ENCODE measurements at regions of chr15 and their contacts with region 1.

Region 1: DNA sequence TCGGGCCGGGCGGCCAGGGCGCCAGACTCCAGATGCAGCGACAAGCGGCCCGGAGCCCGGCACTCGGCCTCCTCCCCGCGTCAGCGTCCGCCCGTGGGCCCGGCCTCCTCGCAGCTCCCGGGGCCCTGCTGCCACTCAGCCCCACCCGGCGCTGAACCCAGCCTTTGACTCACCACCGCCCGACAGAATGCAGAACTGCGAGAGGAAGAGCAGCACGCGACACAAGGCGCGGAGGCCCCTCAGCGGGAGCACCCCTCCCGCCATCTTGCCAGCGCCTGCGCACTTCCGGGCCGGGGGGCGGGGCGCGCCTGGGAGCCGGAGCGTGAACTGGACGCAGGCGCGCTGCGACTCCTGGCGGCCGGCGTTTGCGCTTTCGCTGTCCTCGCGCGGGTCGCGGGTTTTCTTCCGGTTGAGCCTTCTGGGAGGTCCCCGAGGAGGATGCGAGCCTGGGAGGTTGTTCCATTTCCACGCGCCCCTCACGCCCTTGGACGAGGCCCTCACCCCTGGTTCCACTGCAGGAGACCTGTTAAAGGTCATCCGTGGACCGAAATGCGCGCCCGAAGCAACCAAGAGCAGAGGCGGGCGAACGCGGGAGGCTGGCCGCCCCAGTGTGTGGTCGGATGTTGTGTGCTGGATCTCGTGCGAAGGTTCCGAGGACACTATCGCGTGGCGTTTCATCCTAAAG is at the start of gene TM2D3:
- DNase-seq: peak; percentile 89 to 99 (median 94)
- ATAC-seq: peak; percentile 94
- H3K4me3 ChIP-seq: peak within 1 kb of the TSS; percentile 82
- H3K4me3 Mint-ChIP-seq: peak within 1 kb of the TSS; percentile 97
- H3K27ac ChIP-seq: peak within 1 kb of the TSS; percentile 96
- H3K27ac Mint-ChIP-seq: peak within 1 kb of the TSS; percentile 98
- H3K4me1 ChIP-seq: peaks cover 24% of the 10 kb centered on the region
- H3K4me1 Mint-ChIP-seq: peaks cover 48% of the 10 kb centered on the region
- H3K27me3 ChIP-seq: no peaks in the 10 kb centered on the region
- H3K27me3 Mint-ChIP-seq: no peaks in the 10 kb centered on the region
- CTCF ChIP-seq: peak; percentile 82
- total RNA-seq, gene TM2D3: 102 to 107 TPM

Region 2: GRCh38 chr15:101088788-101089583 is 563.3 kb before region 1 on chr15:
- CTCF ChIA-PET with region 1: no interaction called
- POLR2A ChIA-PET with region 1: no interaction called
- intact Hi-C with region 1: loop called in 1 of 2 experiments (anchors 5 kb)
- DNase-seq: peak; percentile 49 to 88 (median 76)
- ATAC-seq: peak; percentile 96
- H3K4me3 ChIP-seq: no peak overlapping the region
- H3K4me3 Mint-ChIP-seq: no peak overlapping the region
- H3K27ac ChIP-seq: no peak overlapping the region
- H3K27ac Mint-ChIP-seq: no peak overlapping the region
- H3K4me1 ChIP-seq: peaks cover 7% of the 10 kb centered on the region
- H3K4me1 Mint-ChIP-seq: no peaks in the 10 kb centered on the region
- H3K27me3 ChIP-seq: peaks cover 0 to 5% of the 10 kb centered on the region in 2 experiments
- H3K27me3 Mint-ChIP-seq: no peaks in the 10 kb centered on the region
- CTCF ChIP-seq: peak; percentile 91

Region 3: GRCh38 chr15:101179341-101180153 is 472.7 kb before region 1 on chr15:
- CTCF ChIA-PET with region 1: no interaction called
- POLR2A ChIA-PET with region 1: no interaction called
- intact Hi-C with region 1: no loop called
- DNase-seq: no peak
- ATAC-seq: no peak
- H3K4me3 ChIP-seq: no peak overlapping the region
- H3K4me3 Mint-ChIP-seq: no peak overlapping the region
- H3K27ac ChIP-seq: no peak overlapping the region
- H3K27ac Mint-ChIP-seq: peak overlapping the region; percentile 60
- H3K4me1 ChIP-seq: no peaks in the 10 kb centered on the region
- H3K4me1 Mint-ChIP-seq: peaks cover 35% of the 10 kb centered on the region
- H3K27me3 ChIP-seq: no peaks in the 10 kb centered on the region
- H3K27me3 Mint-ChIP-seq: no peaks in the 10 kb centered on the region
- CTCF ChIP-seq: no peak

Region 4: DNA sequence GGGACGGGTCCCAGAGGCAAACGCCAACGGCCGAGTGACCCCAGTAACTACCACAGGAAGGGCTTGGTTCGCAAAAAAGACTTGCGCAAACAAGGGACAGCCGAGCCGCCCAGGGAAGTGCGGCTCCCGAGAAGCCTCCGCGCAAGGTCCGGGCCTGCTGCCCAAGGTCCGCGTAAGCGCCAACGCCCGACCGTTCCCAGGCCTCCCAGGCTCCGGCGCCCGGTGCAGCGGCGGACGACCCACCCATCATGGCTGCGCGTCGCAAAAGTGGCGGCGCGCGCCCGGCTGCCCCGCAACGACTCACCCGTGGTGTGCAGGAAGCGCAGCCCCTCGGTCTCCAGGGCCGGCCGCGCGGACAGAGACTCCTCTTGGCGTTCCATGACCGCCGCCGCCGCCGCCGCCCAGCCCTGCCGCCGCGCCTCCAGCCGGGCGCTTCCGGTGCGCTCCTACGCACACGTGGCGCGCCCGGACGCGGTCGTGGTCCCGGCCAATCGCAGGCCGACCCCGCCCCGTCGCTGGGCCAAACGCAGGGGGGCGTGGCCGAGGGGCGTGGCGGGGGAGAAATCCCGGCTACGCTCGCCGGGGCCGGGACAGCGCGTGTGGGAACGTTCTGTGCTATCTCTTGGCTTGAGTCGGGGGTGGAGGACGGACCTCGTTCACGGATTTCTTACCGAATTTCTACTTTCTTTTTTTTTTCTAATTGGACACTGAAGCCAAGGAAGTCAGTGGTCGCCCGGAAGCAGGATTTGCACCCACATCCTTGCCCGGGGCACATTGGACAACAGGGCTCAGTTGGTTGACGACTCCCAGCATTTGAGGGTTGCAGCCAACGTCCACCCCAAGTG is 375.0 kb before region 1 on chr15 and contains the start of gene SELENOS:
- CTCF ChIA-PET with region 1: no interaction called
- POLR2A ChIA-PET with region 1: no interaction called
- intact Hi-C with region 1: loop called in 1 of 2 experiments (anchors 5 kb)
- DNase-seq: peak; percentile 68 to 95 (median 84)
- ATAC-seq: peak; percentile 96
- H3K4me3 ChIP-seq: peak within 1 kb of the TSS; percentile 92
- H3K4me3 Mint-ChIP-seq: peak within 1 kb of the TSS; percentile 97
- H3K27ac ChIP-seq: peak within 1 kb of the TSS; percentile 56 to 58
- H3K27ac Mint-ChIP-seq: peak within 1 kb of the TSS; percentile 95
- H3K4me1 ChIP-seq: peaks cover 23% of the 10 kb centered on the region
- H3K4me1 Mint-ChIP-seq: peaks cover 24% of the 10 kb centered on the region
- H3K27me3 ChIP-seq: no peaks in the 10 kb centered on the region
- H3K27me3 Mint-ChIP-seq: no peaks in the 10 kb centered on the region
- CTCF ChIP-seq: no peak
- total RNA-seq, gene SELENOS: 41.7 to 48.5 TPM

Region 5: DNA sequence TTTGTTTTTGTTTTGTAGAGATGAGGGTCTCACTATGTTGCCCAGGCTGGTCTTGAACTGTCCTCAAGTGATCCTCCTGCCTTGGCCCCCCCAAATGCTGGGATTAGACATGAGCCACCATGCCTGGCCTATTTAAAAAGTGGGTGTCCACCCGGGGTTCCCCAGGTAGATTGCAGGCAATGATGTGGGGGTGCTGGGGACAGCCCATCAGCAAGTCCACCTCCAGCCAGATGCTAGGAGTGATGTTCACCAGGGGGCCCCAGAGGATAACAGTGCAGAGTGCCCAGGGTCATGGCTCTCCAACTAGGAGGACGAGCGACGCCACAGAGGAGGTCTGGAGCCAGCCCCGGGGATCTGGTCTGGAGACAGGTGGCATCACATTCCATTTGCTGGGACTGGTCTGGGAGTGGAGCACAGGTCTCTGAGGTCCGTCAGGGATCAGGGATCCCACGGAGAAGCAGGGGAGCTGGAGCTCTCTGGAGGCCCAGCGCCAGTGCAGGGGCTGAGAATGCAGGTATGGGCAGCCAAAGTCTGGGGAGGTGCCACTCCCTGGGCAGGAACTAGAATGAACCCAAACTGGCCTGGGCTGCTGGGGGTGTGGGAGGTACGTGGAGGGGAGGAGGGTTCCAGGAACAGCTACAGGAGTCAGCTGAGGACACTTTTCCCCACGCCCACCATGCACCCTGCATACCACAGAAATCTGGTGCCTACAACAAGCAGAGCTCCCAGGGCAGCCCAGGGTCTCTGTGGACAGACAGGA is 111.6 kb before region 1 on chr15:
- CTCF ChIA-PET with region 1: no interaction called
- POLR2A ChIA-PET with region 1: no interaction called
- intact Hi-C with region 1: no loop called
- DNase-seq: peak in 1 of 14 experiments; percentile 25
- ATAC-seq: no peak
- H3K4me3 ChIP-seq: no peak overlapping the region
- H3K4me3 Mint-ChIP-seq: no peak overlapping the region
- H3K27ac ChIP-seq: no peak overlapping the region
- H3K27ac Mint-ChIP-seq: no peak overlapping the region
- H3K4me1 ChIP-seq: no peaks in the 10 kb centered on the region
- H3K4me1 Mint-ChIP-seq: no peaks in the 10 kb centered on the region
- H3K27me3 ChIP-seq: peaks cover 0 to 5% of the 10 kb centered on the region in 2 experiments
- H3K27me3 Mint-ChIP-seq: peaks cover 21% of the 10 kb centered on the region
- CTCF ChIP-seq: no peak

Region 6: DNA sequence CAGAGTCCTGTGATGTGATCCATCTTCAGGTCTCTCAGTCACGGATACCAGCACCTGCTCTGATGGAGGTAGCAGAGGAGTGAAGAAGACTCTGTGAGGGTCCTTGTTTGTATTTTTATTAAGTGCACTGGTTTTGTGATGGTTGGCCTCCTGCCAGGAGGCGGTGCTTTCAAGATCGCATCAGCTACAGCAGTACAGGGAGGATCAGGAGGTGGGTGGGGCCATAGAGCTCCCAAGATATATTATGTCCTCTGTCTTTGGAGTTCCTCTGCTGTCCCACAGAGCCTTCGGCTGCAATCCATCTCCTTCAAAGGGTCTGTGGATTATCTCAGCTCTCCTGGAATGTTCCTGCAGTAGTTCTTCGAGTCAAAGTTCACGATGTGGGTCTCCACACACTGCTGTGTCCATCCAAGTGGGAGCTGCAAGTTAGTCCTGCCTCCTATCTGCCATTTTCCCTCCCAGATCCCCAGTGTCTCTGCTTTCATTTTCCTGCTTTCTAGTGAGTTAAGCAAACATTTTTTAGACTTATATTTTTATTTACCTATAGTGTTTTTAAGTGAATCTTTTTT is 54.8 kb before region 1 on chr15:
- CTCF ChIA-PET with region 1: no interaction called
- POLR2A ChIA-PET with region 1: no interaction called
- intact Hi-C with region 1: no loop called
- DNase-seq: no peak
- ATAC-seq: no peak
- H3K4me3 ChIP-seq: no peak overlapping the region
- H3K4me3 Mint-ChIP-seq: no peak overlapping the region
- H3K27ac ChIP-seq: no peak overlapping the region
- H3K27ac Mint-ChIP-seq: no peak overlapping the region
- H3K4me1 ChIP-seq: no peaks in the 10 kb centered on the region
- H3K4me1 Mint-ChIP-seq: no peaks in the 10 kb centered on the region
- H3K27me3 ChIP-seq: peaks cover 2 to 20% of the 10 kb centered on the region in 2 experiments
- H3K27me3 Mint-ChIP-seq: peaks cover 78% of the 10 kb centered on the region
- CTCF ChIP-seq: no peak

Region 7: GRCh38 chr15:101675796-101676582 is 23.7 kb after region 1 on chr15:
- CTCF ChIA-PET with region 1: no interaction called
- POLR2A ChIA-PET with region 1: no interaction called
- intact Hi-C with region 1: no loop called
- DNase-seq: no peak
- ATAC-seq: no peak
- H3K4me3 ChIP-seq: no peak overlapping the region
- H3K4me3 Mint-ChIP-seq: peak overlapping the region; percentile 5
- H3K27ac ChIP-seq: no peak overlapping the region
- H3K27ac Mint-ChIP-seq: peak overlapping the region; percentile 64
- H3K4me1 ChIP-seq: no peaks in the 10 kb centered on the region
- H3K4me1 Mint-ChIP-seq: peaks cover 6% of the 10 kb centered on the region
- H3K27me3 ChIP-seq: no peaks in the 10 kb centered on the region
- H3K27me3 Mint-ChIP-seq: no peaks in the 10 kb centered on the region
- CTCF ChIP-seq: no peak

Region 8: GRCh38 chr15:101723874-101724674 is 71.8 kb after region 1 on chr15 and contains the start of gene TARS3:
- CTCF ChIA-PET with region 1: interaction called, 3 read pairs
- POLR2A ChIA-PET with region 1: interaction called, 13 read pairs
- intact Hi-C with region 1: loop called (anchors 2 to 5 kb)
- DNase-seq: peak; percentile 93 to 100 (median 97)
- ATAC-seq: peak; percentile 92
- H3K4me3 ChIP-seq: peak within 1 kb of the TSS; percentile 64
- H3K4me3 Mint-ChIP-seq: peak within 1 kb of the TSS; percentile 89
- H3K27ac ChIP-seq: peak within 1 kb of the TSS; percentile 61 to 81
- H3K27ac Mint-ChIP-seq: peak within 1 kb of the TSS; percentile 87
- H3K4me1 ChIP-seq: peaks cover 20% of the 10 kb centered on the region
- H3K4me1 Mint-ChIP-seq: peaks cover 42% of the 10 kb centered on the region
- H3K27me3 ChIP-seq: no peaks in the 10 kb centered on the region
- H3K27me3 Mint-ChIP-seq: no peaks in the 10 kb centered on the region
- CTCF ChIP-seq: peak; percentile 38
- total RNA-seq, gene TARS3: 16.6 to 18.1 TPM

Measured in CD4-positive, alpha-beta T cell (primary cell).